Left cardiac atrium (tissue), 4 donors: ENCODE measurements at regions of chr16 and their contacts with region 1.

Region 1: GRCh38 chr16:10737068-10737625 is 6.5 kb upstream of the NUBP1 start:
- DNase-seq: no peak
- ATAC-seq: peak; percentile 62 to 68

Region 2: DNA sequence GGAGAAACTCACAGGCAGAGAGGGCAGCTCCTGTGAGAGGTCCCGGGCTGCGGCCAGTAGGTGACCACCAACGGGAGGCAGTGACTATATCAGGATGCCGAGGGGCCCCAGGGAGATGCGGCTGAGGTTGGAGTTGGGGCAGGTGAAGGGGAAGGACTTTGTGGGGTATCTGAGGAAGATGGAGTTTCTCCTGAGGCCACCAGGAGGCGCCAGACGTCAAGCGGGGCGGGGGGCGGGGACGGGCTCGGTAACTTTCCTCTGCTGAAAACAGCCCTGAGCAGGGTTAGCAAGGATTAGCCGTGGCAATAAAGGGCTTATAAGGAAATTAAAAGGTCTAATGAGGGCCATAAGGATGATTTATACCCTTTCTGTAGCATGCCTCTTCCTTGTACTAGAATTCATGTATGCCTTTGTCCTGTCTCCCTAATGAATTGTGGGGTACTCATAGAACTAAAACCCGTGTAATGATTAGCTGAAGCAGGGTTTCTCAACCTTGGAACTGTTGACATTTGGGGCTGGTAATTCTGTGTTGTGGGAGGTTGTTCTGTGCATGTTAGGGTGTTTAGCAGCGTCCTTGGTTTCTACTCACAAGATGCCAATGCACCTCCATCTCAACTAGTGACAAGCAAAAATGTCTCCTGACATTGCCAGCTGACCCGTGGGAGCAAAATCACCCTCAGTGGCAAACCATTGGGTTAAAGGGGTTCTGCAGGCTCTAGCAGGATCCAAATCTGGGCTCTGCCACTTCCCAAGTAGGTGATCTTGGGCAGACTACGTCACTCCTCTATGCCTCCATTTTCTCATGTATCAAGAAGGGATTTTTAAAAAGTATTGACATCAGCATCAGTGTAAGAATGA is 480.1 kb before region 1 on chr16:
- intact Hi-C with region 1: loop called in 1 of 2 experiments (anchors 10 kb)
- DNase-seq: peak; percentile 40
- ATAC-seq: peak; percentile 63 to 64

Region 3: GRCh38 chr16:10314811-10315210 is 422.3 kb before region 1 on chr16:
- intact Hi-C with region 1: loop called (anchors 10 kb)
- DNase-seq: no peak
- ATAC-seq: peak; percentile 54 to 68

Region 4: DNA sequence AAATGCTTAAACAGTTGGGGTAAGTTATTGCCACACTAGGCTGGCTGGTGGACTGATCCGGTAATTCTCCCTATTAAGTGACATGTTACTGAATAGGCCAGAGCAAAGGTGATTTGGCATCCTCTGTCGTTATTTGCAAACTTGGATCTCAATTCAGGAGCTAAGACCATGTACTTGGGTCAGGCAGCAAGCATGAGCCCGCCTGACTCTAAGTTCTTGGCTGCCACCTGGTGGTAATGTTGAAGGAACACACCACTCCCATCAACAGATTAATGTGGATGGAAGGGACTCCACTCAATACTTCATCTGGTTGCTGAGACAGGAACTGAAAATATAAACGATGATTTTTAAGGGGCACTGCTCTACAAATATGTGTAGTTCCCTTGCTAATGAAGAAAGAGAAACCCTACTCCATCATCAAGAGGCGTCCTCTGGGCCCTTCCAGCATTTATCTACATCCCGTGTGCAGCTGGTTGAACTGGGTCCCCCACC is 227.6 kb before region 1 on chr16:
- intact Hi-C with region 1: loop called in 1 of 2 experiments (anchors 2 kb)
- DNase-seq: peak; percentile 51
- ATAC-seq: peak; percentile 93 to 94

Region 5: GRCh38 chr16:10521681-10522274 is 215.4 kb before region 1 on chr16:
- intact Hi-C with region 1: loop called in 1 of 2 experiments (anchors 2 kb)
- DNase-seq: peak; percentile 51
- ATAC-seq: peak; percentile 79 to 82

Region 6: DNA sequence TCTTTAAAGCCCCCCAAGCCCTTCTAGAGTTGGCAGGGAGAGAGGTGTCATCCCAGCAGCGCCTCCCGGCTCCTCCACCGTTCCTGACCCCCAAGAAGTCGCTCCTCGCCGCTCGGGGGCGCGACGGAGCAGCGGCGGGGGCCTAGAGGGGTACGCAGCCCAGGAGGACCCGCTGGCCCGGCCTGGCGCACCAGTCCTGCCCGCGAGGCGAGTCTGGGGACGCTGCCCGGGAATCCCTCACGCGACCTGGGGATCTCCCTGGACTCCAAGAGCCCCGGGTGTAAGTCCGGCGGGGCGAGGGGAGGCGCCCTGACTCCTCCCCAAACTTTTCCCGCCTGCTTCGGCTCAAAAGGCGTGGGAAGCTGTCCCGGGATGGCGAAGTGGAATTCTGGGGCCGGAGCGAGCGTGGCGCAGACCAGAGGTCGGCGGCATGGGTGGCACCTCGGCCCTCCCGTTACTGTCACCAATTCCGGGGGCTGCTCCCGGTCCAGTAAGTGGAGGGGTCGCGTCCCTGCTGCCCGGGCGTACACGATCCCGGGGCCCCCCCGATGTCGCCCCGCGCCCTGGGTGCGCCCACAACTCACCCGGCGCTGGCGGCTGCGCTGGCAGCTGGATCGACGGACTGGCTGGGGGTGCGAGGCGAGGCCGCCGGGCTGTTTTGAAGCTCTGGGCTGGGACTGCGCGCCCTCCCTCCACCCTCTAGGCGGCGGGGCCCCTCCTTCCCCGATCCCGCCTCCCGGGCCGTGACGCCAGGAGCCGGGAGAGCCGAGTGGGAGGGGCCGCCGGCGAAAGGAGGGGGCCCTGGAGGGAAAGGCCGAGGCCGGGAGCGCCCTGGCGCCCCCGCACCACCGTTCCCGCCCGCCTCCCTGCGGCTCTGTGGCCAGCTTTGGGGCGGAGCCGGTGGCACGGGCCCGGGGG is 156.9 kb before region 1 on chr16 and contains the start of gene EMP2:
- intact Hi-C with region 1: loop called in 1 of 2 experiments (anchors 5 kb)
- DNase-seq: peak; percentile 90
- ATAC-seq: peak; percentile 87 to 93
- total RNA-seq, gene EMP2: 63.4 to 65.2 TPM

Region 7: GRCh38 chr16:10765772-10766171 is 28.6 kb after region 1 on chr16:
- intact Hi-C with region 1: no loop called
- DNase-seq: no peak
- ATAC-seq: no peak